WTC11 (cell line): ENCODE measurements at regions of chr19 and their contacts with region 1.

Region 1: GRCh38 chr19:3125900-3126524 is 9.8 kb upstream of the GNA15 start:
- DNase-seq: peak; percentile 85
- ATAC-seq: peak; percentile 98
- H3K4me3 Mint-ChIP-seq: no peak overlapping the region
- H3K27ac Mint-ChIP-seq: no peak overlapping the region
- H3K4me1 Mint-ChIP-seq: no peaks in the 10 kb centered on the region
- H3K27me3 Mint-ChIP-seq: no peaks in the 10 kb centered on the region
- CTCF ChIP-seq: peak; percentile 80

Region 2: DNA sequence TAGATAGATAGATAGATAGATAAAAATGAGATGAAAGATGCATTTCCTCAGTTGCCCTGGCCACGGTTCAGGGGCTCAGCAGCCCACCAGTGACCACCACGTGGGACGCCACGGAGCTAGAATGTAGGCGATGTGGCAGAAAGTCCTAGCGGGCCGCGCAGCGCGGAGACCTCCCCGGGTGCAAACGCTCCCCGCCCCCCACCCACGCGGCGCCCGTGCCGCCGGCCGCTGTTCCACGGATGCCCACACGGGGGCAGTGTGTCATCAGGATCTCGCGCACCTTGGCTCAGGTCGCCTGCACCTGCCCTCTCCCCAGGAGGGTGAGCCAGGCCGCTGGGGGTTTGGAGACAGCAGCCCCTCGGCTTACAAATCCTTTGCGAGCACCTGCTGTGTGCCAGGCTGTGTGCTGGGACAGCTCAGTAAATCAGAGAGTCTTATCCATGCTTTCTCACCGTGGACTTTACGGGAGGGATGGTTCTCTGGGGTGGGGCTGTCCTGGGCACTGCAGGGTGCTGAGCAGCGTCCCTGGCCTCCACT is 50.0 kb before region 1 on chr19:
- CTCF ChIA-PET with region 1: interaction called, 13 read pairs
- POLR2A ChIA-PET with region 1: no interaction called
- DNase-seq: peak; percentile 76
- ATAC-seq: peak; percentile 78
- H3K4me3 Mint-ChIP-seq: peak overlapping the region; percentile 54
- H3K27ac Mint-ChIP-seq: no peak overlapping the region
- H3K4me1 Mint-ChIP-seq: peaks cover 2% of the 10 kb centered on the region; the same call in 1 of the 2 replicates
- H3K27me3 Mint-ChIP-seq: peaks cover 4% of the 10 kb centered on the region
- CTCF ChIP-seq: peak; percentile 81

Region 3: DNA sequence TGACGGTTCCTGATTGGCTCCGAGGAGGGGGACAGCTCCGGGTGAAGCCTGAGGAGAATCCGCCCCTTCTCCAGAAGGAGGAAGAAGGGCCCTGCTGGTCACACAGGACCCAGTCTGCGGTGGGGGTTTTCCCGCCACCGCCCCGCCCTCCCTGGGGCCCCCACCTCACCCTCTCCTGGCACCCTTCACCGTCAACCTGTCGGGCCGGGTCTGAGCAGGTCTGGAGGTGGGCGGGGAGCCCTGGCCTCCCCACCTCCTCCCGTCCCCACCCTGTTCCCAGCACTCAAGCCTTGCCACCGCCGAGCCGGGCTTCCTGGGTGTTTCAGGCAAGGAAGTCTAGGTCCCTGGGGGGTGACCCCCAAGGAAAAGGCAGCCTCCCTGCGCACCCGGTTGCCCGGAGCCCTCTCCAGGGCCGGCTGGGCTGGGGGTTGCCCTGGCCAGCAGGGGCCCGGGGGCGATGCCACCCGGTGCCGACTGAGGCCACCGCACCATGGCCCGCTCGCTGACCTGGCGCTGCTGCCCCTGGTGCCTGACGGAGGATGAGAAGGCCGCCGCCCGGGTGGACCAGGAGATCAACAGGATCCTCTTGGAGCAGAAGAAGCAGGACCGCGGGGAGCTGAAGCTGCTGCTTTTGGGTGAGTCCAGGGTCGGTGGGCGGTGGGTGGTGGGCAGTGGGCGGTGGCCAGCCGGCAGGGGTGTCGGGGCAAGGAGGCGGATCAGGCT is 10.1 kb after region 1 on chr19 and contains the start of gene GNA15:
- CTCF ChIA-PET with region 1: interaction called, 21 read pairs
- POLR2A ChIA-PET with region 1: interaction called, 3 read pairs
- DNase-seq: no peak
- ATAC-seq: no peak
- H3K4me3 Mint-ChIP-seq: no peak within 1 kb of the TSS
- H3K27ac Mint-ChIP-seq: no peak within 1 kb of the TSS
- H3K4me1 Mint-ChIP-seq: peaks cover 9% of the 10 kb centered on the region
- H3K27me3 Mint-ChIP-seq: no peaks in the 10 kb centered on the region; the same call in 1 of the 2 replicates
- CTCF ChIP-seq: no peak
- total RNA-seq, gene GNA15: 0.22 to 0.44 TPM (median 0.37 TPM) in 3 replicates

Region 4: DNA sequence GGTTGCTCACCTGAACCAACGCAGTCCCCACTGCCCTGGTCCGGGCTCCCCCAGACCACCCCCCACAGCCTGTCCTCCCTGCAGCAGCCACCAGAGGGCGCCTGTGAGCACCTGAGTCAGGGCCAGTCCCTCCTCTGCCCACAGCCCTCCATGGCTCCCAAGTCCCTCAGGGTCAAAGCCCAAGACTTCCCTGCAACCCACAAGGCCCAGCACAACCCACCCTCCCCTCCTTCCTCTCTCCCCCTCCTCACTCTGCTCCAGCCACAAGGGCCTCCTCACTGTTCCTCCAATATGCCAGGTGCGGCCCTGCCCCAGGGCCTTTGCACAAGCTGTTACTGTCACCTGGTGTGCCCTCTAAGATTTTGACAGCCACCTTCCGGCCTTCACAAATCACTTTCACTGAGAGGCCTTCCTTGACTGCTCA is 20.7 kb after region 1 on chr19:
- CTCF ChIA-PET with region 1: interaction called, 18 read pairs
- POLR2A ChIA-PET with region 1: no interaction called
- DNase-seq: peak; percentile 84
- ATAC-seq: peak; percentile 77
- H3K4me3 Mint-ChIP-seq: no peak overlapping the region
- H3K27ac Mint-ChIP-seq: no peak overlapping the region
- H3K4me1 Mint-ChIP-seq: peaks cover 3% of the 10 kb centered on the region; the same call in 1 of the 2 replicates
- H3K27me3 Mint-ChIP-seq: no peaks in the 10 kb centered on the region; the same call in 1 of the 2 replicates
- CTCF ChIP-seq: peak; percentile 90

Region 5: DNA sequence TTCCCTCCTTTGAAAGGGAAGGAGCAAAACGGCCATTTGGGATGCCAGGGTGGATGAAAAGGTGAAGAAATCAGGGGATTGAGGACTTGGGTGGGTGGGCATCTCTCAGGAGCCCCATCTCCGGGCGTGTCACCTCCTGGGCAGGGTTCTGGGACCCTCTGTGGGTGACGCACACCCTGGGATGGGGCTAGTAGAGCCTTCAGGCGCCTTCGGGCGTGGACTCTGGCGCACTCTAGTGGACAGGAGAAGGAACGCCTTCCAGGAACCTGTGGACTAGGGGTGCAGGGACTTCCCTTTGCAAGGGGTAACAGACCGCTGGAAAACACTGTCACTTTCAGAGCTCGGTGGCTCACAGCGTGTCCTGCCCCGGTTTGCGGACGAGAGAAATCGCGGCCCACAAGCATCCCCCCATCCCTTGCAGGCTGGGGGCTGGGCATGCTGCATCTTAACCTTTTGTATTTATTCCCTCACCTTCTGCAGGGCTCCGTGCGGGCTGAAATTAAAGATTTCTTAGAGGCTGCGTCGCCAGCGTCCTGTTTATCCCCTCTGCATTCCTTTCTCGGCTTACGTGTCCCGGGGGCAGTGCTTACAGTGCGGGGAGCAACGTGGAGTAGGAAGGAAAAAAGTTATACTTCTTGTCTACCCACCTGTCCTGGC is 37.3 kb after region 1 on chr19:
- CTCF ChIA-PET with region 1: interaction called, 51 read pairs
- POLR2A ChIA-PET with region 1: no interaction called
- DNase-seq: peak; percentile 83
- ATAC-seq: peak; percentile 98
- H3K4me3 Mint-ChIP-seq: peak overlapping the region; percentile 67
- H3K27ac Mint-ChIP-seq: no peak overlapping the region
- H3K4me1 Mint-ChIP-seq: peaks cover 7% of the 10 kb centered on the region
- H3K27me3 Mint-ChIP-seq: peaks cover 14% of the 10 kb centered on the region
- CTCF ChIP-seq: peak; percentile 83

Region 6: GRCh38 chr19:3195948-3196695 is 70.1 kb after region 1 on chr19:
- CTCF ChIA-PET with region 1: no interaction called
- POLR2A ChIA-PET with region 1: no interaction called
- DNase-seq: no peak
- ATAC-seq: no peak
- H3K4me3 Mint-ChIP-seq: no peak overlapping the region
- H3K27ac Mint-ChIP-seq: no peak overlapping the region
- H3K4me1 Mint-ChIP-seq: no peaks in the 10 kb centered on the region
- H3K27me3 Mint-ChIP-seq: no peaks in the 10 kb centered on the region
- CTCF ChIP-seq: no peak

Region 7: DNA sequence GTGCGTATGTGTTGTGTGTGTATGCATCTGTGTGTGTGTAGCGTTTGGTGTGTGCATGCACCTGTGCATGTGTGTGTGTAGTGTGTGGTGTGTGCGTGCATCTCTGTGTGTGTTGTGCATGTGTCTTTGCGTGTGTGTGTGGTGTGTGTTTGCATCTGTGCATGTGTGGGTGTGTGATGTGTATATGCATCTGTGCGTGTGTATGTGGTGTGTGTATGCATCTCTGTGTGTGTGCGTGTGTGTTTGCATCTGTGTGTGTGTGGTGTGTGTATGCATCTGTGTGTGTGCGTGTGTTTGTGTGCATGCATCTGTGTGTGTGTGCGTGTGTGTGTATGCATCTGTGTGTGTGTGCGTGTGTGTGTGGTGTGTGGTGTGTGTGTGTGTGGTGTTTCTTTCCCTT is 119.0 kb after region 1 on chr19:
- CTCF ChIA-PET with region 1: no interaction called
- POLR2A ChIA-PET with region 1: no interaction called
- DNase-seq: no peak
- ATAC-seq: no peak
- H3K4me3 Mint-ChIP-seq: no peak overlapping the region
- H3K27ac Mint-ChIP-seq: no peak overlapping the region
- H3K4me1 Mint-ChIP-seq: peaks cover 3% of the 10 kb centered on the region
- H3K27me3 Mint-ChIP-seq: peaks cover 7% of the 10 kb centered on the region
- CTCF ChIP-seq: no peak